ENCODE measurements at regions of chrX and their contacts with region 1.

Region 1: DNA sequence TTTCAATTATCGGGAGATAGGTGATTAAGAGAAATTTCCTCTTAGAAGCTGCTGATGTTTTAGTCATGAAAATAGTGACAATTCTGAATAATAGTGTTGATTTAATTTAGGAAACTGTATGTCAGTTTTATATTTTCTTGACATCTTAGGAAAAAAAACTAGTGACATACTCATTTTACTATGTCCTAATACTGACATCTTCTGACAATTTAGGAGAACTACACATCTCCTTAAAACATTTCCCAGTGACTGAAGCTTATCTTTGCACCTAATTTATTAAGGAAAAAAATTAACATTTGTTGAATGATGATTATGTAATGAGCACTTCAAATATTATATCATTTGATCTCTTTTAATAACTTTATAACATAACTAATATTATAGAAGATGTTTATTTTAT is 42.0 kb upstream of the RBMXL3 start:
- DNase-seq: peak; percentile 21
- H3K4me3 ChIP-seq: no peak overlapping the region
- H3K27ac ChIP-seq: no peak overlapping the region
- H3K4me1 ChIP-seq: no peaks in the 10 kb centered on the region
- H3K27me3 ChIP-seq: no peaks in the 10 kb centered on the region
- CTCF ChIP-seq: peak in 1 of 2 donors; percentile 9
- POLR2A ChIP-seq: no peak

Region 2: GRCh38 chrX:114611018-114611619 is 536.1 kb before region 1 on chrX:
- CTCF ChIA-PET with region 1: interaction called, 14 read pairs
- POLR2A ChIA-PET with region 1: no interaction called
- dilution Hi-C with region 1: no loop called
- intact Hi-C with region 1: loop called (anchors 5 kb)
- DNase-seq: peak; percentile 31
- H3K4me3 ChIP-seq: no peak overlapping the region
- H3K27ac ChIP-seq: no peak overlapping the region
- H3K4me1 ChIP-seq: no peaks in the 10 kb centered on the region
- H3K27me3 ChIP-seq: no peaks in the 10 kb centered on the region
- CTCF ChIP-seq: peak; percentile 40 to 50
- POLR2A ChIP-seq: no peak

Region 3: GRCh38 chrX:114626323-114626722 is 520.9 kb before region 1 on chrX:
- CTCF ChIA-PET with region 1: interaction called, 64 read pairs
- POLR2A ChIA-PET with region 1: no interaction called
- dilution Hi-C with region 1: no loop called
- intact Hi-C with region 1: no loop called
- DNase-seq: peak; percentile 4
- H3K4me3 ChIP-seq: no peak overlapping the region
- H3K27ac ChIP-seq: no peak overlapping the region
- H3K4me1 ChIP-seq: no peaks in the 10 kb centered on the region
- H3K27me3 ChIP-seq: no peaks in the 10 kb centered on the region
- CTCF ChIP-seq: peak in 1 of 2 donors; percentile 24
- POLR2A ChIP-seq: no peak

Region 4: DNA sequence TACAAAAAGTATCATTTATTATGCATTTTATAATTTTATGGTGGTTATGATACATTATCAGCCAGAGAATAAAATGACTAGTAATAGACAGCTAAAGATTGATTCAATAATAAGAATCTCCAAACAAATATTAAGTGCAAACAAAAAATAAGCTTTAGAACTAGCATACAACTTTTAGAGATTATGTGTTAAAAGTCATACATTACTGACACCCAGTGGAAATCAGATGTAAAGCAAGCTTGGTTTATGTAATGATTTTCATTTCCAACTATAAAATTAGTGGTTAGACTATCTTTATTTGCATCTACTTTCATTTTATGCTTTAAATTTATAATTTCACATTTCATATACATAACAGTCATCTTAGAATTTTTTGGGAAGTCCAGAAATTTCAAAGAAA is 187.5 kb before region 1 on chrX:
- CTCF ChIA-PET with region 1: interaction called, 15 read pairs
- POLR2A ChIA-PET with region 1: no interaction called
- dilution Hi-C with region 1: no loop called
- intact Hi-C with region 1: loop called (anchors 2 kb)
- DNase-seq: no peak
- H3K4me3 ChIP-seq: no peak overlapping the region
- H3K27ac ChIP-seq: no peak overlapping the region
- H3K4me1 ChIP-seq: no peaks in the 10 kb centered on the region
- H3K27me3 ChIP-seq: no peaks in the 10 kb centered on the region
- CTCF ChIP-seq: no peak
- POLR2A ChIP-seq: no peak

Region 5: DNA sequence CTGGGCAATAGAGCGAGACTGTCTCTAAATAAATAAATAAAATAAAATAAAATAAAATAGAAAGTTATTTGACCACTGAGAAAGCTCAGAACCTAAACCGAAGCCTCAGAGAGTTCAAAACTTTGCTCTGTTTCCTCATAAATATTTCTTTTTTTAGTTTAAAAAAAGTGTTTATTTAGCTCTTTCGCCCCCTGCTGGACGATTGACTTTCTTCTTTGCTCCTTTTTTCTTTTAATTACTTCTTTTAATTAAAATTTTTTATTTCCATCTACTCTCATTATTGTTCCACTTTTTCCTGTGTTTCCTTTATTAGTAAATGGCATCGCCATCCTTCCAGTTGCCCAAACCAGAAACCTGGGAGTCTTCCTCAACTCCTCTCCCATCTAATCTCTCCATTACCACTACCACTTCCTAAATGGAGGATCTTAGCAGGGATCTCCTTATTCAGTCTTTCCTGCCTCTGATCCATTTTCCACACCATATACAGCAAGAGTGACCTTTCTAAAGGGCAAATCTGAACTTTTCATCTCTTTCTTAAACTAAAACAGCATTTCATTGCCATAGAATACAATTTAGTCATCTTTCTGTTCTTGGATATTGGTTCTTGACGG is 129.1 kb before region 1 on chrX:
- CTCF ChIA-PET with region 1: interaction called, 6 read pairs
- POLR2A ChIA-PET with region 1: no interaction called
- dilution Hi-C with region 1: no loop called
- intact Hi-C with region 1: loop called (anchors 2 kb)
- DNase-seq: no peak
- H3K4me3 ChIP-seq: no peak overlapping the region
- H3K27ac ChIP-seq: no peak overlapping the region
- H3K4me1 ChIP-seq: peaks cover 10% of the 10 kb centered on the region
- H3K27me3 ChIP-seq: no peaks in the 10 kb centered on the region
- CTCF ChIP-seq: peak; percentile 8 to 9
- POLR2A ChIP-seq: no peak

Measured in endothelial cell of umbilical vein (primary cell).